Left ventricle myocardium inferior (tissue), 1 donor: ENCODE measurements at regions of chr4 and their contacts with region 1.

Region 1: DNA sequence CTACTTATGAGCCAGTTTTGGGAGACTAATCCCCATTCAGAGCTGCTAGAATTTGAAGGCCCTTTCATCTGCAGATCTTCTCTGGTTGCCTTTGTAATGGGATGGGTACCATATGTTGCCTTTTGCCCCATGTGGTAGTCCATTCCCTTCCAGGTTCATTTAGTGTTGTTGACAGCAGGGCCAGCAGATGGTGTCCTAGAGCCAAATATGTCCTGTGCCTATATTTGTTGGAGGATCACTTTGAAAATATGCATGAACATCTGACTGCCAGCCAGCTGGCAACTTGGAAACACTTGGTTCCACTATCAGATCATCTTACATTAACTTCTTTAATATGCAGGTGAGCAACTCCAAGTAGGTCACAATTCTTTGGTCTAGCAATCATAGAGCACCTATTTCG is 30.4 kb downstream of the CFAP299 start:
- DNase-seq: no peak
- H3K4me3 ChIP-seq: no peak overlapping the region
- H3K27ac ChIP-seq: no peak overlapping the region
- H3K4me1 ChIP-seq: no peaks in the 10 kb centered on the region
- H3K27me3 ChIP-seq: peaks cover 16% of the 10 kb centered on the region
- CTCF ChIP-seq: peak; percentile 57

Region 2: GRCh38 chr4:79700365-79700764 is 665.6 kb before region 1 on chr4:
- intact Hi-C with region 1: no loop called
- DNase-seq: no peak
- H3K4me3 ChIP-seq: no peak overlapping the region
- H3K27ac ChIP-seq: no peak overlapping the region
- H3K4me1 ChIP-seq: no peaks in the 10 kb centered on the region
- H3K27me3 ChIP-seq: no peaks in the 10 kb centered on the region
- CTCF ChIP-seq: no peak

Region 3: GRCh38 chr4:80454040-80454439 is 88.1 kb after region 1 on chr4:
- intact Hi-C with region 1: no loop called
- DNase-seq: no peak
- H3K4me3 ChIP-seq: no peak overlapping the region
- H3K27ac ChIP-seq: no peak overlapping the region
- H3K4me1 ChIP-seq: no peaks in the 10 kb centered on the region
- H3K27me3 ChIP-seq: no peaks in the 10 kb centered on the region
- CTCF ChIP-seq: no peak

Region 4: DNA sequence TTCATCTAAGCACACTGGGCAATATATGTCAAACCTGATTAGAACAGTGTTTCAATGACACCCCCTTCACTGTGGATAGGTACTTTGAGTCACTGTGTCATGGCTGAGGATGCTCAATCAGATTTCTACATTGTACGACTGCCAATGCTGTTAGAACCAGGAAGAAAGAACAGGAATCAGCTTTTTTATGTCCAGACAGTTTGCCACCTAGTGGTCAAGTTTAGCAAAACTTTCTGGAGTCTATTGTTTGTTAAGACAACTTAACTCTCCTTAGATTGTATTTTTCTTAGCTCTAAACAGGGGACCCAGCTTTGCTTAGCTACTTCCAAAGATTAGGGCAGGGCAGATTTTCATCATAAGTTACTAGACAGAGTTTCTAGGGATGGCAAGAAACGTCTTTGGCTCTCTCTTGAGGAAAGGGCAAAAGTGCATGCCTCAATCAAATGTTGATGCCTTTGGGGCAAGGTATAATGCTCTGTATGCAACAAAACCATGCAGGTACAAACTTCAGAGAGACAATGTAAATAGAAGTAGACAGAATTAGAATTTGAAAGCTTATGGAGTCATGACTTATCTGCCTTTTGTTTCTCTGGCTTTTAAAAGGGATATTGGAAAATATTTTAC is 624.1 kb after region 1 on chr4:
- intact Hi-C with region 1: loop called (anchors 5 kb)
- DNase-seq: no peak
- H3K4me3 ChIP-seq: no peak overlapping the region
- H3K27ac ChIP-seq: no peak overlapping the region
- H3K4me1 ChIP-seq: no peaks in the 10 kb centered on the region
- H3K27me3 ChIP-seq: peaks cover 7% of the 10 kb centered on the region
- CTCF ChIP-seq: peak; percentile 70

Region 5: GRCh38 chr4:81052119-81053068 is 686.5 kb after region 1 on chr4:
- intact Hi-C with region 1: loop called (anchors 10 kb)
- DNase-seq: no peak
- H3K4me3 ChIP-seq: no peak overlapping the region
- H3K27ac ChIP-seq: no peak overlapping the region
- H3K4me1 ChIP-seq: peaks cover 14% of the 10 kb centered on the region
- H3K27me3 ChIP-seq: peaks cover 6% of the 10 kb centered on the region
- CTCF ChIP-seq: peak; percentile 70